ENCODE measurements at regions of chr7 and their contacts with region 1.

Region 1: DNA sequence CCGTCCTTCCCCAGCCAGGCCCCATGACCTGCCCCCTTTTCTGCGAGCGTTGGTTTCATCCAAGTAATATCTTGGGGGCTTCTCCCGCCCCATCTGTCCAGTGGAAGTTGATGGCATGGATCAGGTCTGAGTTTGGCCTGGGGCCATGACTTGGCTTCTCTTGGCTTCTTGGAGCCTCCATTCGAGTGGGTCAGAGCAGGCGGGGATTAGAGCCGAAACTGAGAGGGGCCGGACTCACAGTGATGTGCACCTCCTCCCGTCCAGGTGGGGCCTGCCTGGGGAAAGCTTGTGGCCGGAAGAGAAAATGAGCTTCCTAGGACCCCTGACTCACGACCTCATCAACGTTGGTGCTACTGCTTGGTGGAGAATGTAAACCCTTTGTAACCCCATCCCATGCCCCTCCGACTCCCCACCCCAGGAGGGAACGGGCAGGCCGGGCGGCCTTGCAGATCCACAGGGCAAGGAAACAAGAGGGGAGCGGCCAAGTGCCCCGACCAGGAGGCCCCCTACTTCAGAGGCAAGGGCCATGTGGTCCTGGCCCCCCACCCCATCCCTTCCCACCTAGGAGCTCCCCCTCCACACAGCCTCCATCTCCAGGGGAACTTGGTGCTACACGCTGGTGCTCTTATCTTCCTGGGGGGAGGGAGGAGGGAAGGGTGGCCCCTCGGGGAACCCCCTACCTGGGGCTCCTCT is 15.1 kb upstream of the LIMK1 start:
- DNase-seq: no peak
- H3K4me3 ChIP-seq: no peak overlapping the region
- H3K27ac ChIP-seq: peak overlapping the region in 2 of 4 donors; percentile 31 to 45
- H3K4me1 ChIP-seq: no peaks in the 10 kb centered on the region
- H3K27me3 ChIP-seq: no peaks in the 10 kb centered on the region
- CTCF ChIP-seq: no peak
- EP300 ChIP-seq: no peak
- POLR2A ChIP-seq: no peak

Region 2: DNA sequence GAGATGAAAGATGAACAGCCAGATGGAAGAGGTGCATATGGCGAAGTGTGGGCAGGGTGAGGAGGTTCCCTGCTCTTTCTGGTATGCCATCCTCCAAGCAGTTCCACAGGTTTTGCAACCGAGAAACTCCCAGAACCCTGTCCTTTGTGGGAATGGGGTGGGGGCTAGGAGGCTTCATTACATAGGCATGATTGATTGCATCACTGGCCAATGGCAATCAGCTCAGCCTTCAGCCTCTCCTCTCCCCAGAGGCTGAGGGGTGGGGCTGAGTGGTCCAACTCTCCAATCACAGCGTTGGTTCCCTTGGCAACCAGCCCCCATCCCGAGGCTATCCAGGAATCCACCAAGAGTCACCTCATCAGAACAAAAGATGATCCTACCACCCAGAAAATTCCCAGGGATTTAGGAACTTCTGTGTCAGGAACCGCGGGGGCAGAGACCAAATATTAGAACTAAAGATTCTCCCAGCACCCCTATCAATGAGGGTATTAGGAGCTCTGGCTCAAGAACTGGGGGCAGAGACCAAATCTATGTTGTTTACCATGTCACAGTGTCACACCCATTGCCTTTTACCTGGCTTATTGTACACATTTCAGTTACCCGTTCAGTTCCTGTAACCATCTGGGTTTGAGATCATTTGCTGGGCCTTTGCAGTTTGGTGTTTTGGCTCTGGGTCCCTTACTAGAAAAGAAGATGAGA is 275.8 kb before region 1 on chr7:
- intact Hi-C with region 1: no loop called
- DNase-seq: peak; percentile 26
- H3K4me3 ChIP-seq: no peak overlapping the region
- H3K27ac ChIP-seq: no peak overlapping the region
- H3K4me1 ChIP-seq: no peaks in the 10 kb centered on the region
- H3K27me3 ChIP-seq: peaks cover 0 to 5% (median 2%) of the 10 kb centered on the region in 3 donors
- CTCF ChIP-seq: no peak
- EP300 ChIP-seq: no peak
- POLR2A ChIP-seq: no peak

Region 3: DNA sequence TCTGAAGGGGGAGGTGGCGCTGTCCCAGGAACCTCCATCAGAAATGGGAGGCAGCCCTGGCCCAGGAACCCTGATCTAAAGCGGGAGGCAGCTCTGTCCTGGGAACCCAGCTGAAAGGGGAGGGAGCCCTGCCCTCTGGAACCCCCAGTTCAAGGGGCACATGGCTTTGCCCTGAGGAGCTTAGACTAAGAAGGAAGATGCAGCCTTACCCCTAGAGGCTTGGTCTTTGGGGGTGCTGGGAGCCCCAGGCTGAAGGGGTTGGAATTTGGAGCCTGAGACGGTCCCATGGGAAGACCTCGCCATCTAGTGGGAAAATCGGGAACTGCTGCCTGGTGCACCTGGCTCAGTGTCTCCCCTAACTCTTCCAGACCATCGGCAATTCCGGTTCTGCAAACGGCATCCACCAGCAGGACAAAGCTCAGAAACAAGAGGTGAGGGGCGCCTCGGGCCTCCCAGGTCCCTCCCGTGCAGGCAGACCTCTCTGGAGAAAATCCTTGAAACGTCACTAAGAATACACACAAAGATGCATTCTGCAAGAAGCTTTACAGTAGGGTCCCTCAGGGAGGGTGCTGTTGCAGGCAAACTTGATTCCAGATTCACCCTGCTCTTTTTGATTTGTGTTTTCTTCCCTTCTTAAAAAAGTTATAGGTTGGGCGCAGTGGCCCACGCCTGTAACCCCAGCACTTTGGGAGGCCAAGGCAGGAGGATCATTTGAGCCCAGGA is 332.8 kb after region 1 on chr7:
- intact Hi-C with region 1: loop called (anchors 5 kb)
- DNase-seq: peak; percentile 83
- H3K4me3 ChIP-seq: no peak overlapping the region
- H3K27ac ChIP-seq: no peak overlapping the region
- H3K4me1 ChIP-seq: no peaks in the 10 kb centered on the region
- H3K27me3 ChIP-seq: no peaks in the 10 kb centered on the region
- CTCF ChIP-seq: peak; percentile 88 to 99 (median 90)
- EP300 ChIP-seq: no peak
- POLR2A ChIP-seq: no peak

Region 4: DNA sequence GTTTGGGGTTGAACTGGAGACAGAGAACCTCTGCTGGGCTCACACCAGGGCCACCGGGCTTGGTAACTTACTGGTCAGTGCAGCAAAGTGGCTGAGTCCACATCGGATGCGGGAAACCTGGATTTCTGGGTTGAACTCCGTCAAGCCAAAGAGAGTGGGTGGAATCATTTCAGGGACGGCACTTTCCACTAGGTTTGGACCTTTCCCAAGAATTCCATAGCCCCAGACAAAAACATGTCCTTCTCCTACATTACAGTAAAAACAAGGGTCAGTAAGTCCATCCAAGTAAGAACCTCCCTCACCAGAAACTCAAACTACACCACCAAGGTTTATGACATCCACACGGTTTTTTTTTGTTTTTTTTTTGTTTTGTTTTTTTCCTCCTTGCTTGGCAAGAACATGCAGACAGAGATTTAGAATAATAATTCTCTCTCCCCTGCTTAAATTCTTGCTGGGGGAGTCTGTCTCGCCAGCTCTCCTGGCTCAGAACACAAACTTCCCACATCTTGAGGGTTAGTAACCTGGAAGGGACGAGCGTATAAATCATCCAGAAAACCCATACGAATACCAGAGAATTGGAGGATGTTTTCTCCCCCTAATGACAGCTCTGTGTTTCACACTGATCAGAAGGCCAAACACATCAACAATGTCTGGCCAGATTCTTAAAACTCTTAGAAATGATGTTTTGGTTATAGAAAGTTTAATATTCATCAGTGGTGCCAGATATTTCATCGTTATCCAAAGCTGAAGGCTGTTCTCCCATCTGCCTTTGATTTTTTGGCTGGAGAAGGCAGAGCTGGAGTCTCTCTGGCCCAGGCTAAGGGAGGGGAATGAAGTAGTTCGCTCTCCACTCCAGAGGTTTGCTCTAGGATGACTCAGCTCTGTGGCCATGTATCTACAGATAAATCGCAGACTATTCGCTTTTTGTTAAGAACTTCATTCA is 987.6 kb after region 1 on chr7:
- intact Hi-C with region 1: no loop called
- DNase-seq: peak; percentile 84
- H3K4me3 ChIP-seq: no peak overlapping the region
- H3K27ac ChIP-seq: peak overlapping the region; percentile 65 to 84 (median 80)
- H3K4me1 ChIP-seq: peaks cover 0 to 50% (median 38%) of the 10 kb centered on the region in 4 donors
- H3K27me3 ChIP-seq: no peaks in the 10 kb centered on the region
- CTCF ChIP-seq: no peak
- EP300 ChIP-seq: no peak
- POLR2A ChIP-seq: no peak

Measured in sigmoid colon (tissue), 7 donors.